ENCODE measurements at regions of chr2 and their contacts with region 1.

Region 1: GRCh38 chr2:231297108-231297908 is 98.2 kb upstream of the B3GNT7 start:
- DNase-seq: peak; percentile 59 to 68 (median 64)
- ATAC-seq: peak; percentile 95
- H3K4me3 ChIP-seq: no peak overlapping the region
- H3K27ac ChIP-seq: no peak overlapping the region
- H3K4me1 ChIP-seq: peaks cover 0 to 3% of the 10 kb centered on the region in 2 experiments; a peak in 3 of 5 replicates
- H3K27me3 ChIP-seq: peaks cover 11 to 34% of the 10 kb centered on the region in 2 experiments; a peak in 3 of 5 replicates
- CTCF ChIP-seq: peak; percentile 61 to 69 (median 68)
- EP300 ChIP-seq: no peak
- POLR2A ChIP-seq: no peak
- RAD21 ChIP-seq: peak; percentile 40 to 59

Region 2: DNA sequence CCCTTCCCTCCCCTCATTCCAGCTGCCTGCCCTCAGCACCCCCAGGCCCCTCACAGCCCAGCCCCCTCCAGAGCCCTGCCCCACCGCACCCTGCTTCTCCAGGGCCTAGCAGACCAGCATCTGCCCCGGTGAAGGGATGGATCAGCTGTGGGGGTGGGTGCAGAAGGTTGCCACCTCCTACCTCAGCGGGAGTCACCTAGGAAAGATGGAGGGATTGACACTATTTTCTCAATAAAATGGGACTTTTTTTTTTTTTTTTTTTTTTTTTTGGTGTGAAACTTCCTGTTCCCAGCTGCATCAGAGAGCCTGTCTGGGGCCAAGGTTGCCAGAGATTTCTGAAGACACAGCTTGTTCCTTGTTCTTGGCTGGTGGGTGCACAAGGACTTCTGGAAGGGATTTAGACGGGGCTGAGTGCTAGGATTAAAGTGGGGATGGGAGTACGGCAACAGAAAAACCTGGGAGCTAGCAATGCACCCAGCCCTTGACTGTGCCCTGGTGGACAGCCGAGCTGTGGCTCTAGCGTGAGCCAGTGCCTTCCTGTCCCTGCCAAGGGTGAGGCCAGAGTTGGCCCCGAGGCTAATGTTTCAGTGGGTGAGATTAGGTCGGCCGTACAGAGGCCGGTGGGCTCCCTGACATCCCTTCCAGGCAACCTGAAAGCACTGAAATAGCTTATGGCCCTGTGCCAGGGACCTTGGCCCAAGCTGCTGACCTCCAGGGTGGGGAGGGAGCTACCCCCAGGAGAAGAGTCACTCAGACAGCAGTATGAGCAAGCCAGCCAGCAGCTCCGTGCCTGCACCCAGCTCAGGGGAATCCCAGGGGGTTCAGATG is 102.8 kb after region 1 on chr2:
- CTCF ChIA-PET with region 1: no interaction called
- POLR2A ChIA-PET with region 1: no interaction called
- in situ Hi-C with region 1: no loop called
- intact Hi-C with region 1: loop called (anchors 10 kb)
- DNase-seq: peak in 1 of 4 experiments; percentile 36
- ATAC-seq: peak; percentile 72
- H3K4me3 ChIP-seq: no peak overlapping the region
- H3K27ac ChIP-seq: no peak overlapping the region; the same call in 2 of the 3 replicates
- H3K4me1 ChIP-seq: peaks cover 4 to 12% of the 10 kb centered on the region in 2 experiments; a peak in 4 of 5 replicates
- H3K27me3 ChIP-seq: peaks cover 0 to 16% of the 10 kb centered on the region in 2 experiments; a peak in 2 of 5 replicates
- CTCF ChIP-seq: no peak
- EP300 ChIP-seq: no peak
- POLR2A ChIP-seq: no peak
- RAD21 ChIP-seq: no peak

Region 3: DNA sequence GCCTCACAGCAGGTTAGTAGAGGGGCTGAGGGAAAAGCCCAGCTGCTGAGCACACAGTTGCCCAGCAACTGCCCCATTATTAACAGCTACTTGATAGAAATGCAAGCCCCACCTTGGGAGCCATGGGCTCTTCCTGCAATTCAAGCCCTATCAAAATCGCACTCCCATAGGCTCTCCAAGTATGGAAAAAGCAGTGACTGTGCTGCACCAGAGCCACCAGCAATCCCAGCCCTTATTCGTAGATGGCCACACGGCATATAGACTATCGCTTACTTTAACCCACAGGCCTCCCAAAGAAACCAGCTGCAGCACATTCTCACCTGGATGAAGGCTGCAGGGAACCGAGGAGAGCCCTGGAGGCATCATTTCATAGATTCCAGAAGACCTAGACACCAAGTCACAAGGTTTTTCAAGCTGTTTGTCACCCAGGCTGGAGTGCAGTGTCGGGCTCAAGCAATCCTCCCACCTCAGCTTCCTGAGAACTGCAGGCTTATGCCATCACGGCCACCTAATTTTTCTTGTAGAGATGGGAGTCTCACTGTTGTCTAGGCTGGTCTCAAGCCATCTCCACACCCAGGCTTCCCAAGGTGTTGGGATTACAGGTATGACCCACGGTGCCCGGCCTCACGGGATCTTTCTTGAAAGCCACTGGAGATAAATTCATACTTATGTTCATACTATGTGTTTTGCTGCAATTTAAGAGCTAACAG is 155.6 kb after region 1 on chr2:
- CTCF ChIA-PET with region 1: no interaction called
- POLR2A ChIA-PET with region 1: no interaction called
- in situ Hi-C with region 1: no loop called
- intact Hi-C with region 1: loop called (anchors 2 kb)
- DNase-seq: peak in 1 of 4 experiments; percentile 33
- ATAC-seq: peak; percentile 60
- H3K4me3 ChIP-seq: no peak overlapping the region
- H3K27ac ChIP-seq: no peak overlapping the region; the same call in 2 of the 3 replicates
- H3K4me1 ChIP-seq: no peaks in the 10 kb centered on the region; a peak in 1 of 5 replicates
- H3K27me3 ChIP-seq: no peaks in the 10 kb centered on the region
- CTCF ChIP-seq: no peak
- EP300 ChIP-seq: no peak
- POLR2A ChIP-seq: peak; percentile 69; the same call in 1 of the 2 replicates
- RAD21 ChIP-seq: no peak

Region 4: GRCh38 chr2:231482806-231483391 is 185.6 kb after region 1 on chr2:
- CTCF ChIA-PET with region 1: no interaction called
- POLR2A ChIA-PET with region 1: no interaction called
- in situ Hi-C with region 1: no loop called
- intact Hi-C with region 1: no loop called
- DNase-seq: peak; percentile 60 to 77 (median 70)
- ATAC-seq: peak; percentile 95
- H3K4me3 ChIP-seq: no peak overlapping the region
- H3K27ac ChIP-seq: no peak overlapping the region
- H3K4me1 ChIP-seq: peaks cover 0 to 15% of the 10 kb centered on the region in 2 experiments; a peak in 2 of 5 replicates
- H3K27me3 ChIP-seq: no peaks in the 10 kb centered on the region
- CTCF ChIP-seq: peak; percentile 68 to 76 (median 75)
- EP300 ChIP-seq: no peak
- POLR2A ChIP-seq: no peak
- RAD21 ChIP-seq: peak; percentile 37 to 41